CD4-positive, alpha-beta memory T cell (primary cell): ENCODE measurements at regions of chr4 and their contacts with region 1.

Region 1: DNA sequence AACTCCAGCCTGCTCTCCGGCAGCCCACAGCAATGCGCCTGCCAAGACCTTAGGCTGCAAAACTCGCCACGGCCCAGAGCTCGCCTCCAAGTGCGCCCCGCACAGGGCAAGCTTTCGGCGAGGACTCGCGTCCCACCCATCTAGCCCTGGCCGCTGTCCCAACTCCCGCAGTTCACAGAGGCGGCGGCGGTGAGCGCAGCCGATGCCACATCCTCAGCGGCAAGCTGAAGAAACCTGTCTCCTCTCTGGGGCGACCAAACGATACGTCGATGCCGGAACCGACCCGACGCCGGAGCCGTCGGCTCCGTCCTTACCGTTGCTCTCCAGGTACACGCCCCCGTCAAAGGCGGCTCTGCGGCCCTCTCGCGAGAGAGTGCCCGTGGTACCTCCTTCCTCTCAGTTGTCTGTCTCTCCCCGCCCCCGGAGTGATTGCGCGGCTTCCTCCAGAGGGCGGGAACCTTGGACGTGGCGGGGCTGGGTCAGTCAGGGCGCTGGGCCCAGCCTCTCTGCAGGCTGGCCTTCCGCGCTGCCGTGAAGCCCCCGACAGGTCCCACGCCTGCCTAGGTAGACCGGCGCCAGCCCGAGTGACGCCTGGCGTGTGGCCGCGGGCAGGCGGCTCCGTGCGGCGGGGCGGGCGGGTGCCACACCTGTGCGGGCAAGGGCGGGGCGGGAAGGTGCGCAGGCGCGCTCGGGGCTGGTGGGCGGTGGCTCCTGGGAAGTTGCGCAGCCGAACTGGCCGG is 380 bp upstream of the RAB33B start:
- DNase-seq: peak; percentile 97 to 99 (median 98)
- H3K4me3 ChIP-seq: peak overlapping the region; percentile 68 to 71
- H3K4me3 Mint-ChIP-seq: peak overlapping the region; percentile 95 to 99 (median 97)
- H3K27ac ChIP-seq: peak overlapping the region; percentile 89
- H3K27ac Mint-ChIP-seq: peak overlapping the region; percentile 98 to 100 (median 99)
- H3K4me1 ChIP-seq: peaks cover 59% of the 10 kb centered on the region
- H3K4me1 Mint-ChIP-seq: peaks cover 48 to 73% (median 61%) of the 10 kb centered on the region in 4 donors
- H3K27me3 ChIP-seq: no peaks in the 10 kb centered on the region
- H3K27me3 Mint-ChIP-seq: no peaks in the 10 kb centered on the region

Region 2: DNA sequence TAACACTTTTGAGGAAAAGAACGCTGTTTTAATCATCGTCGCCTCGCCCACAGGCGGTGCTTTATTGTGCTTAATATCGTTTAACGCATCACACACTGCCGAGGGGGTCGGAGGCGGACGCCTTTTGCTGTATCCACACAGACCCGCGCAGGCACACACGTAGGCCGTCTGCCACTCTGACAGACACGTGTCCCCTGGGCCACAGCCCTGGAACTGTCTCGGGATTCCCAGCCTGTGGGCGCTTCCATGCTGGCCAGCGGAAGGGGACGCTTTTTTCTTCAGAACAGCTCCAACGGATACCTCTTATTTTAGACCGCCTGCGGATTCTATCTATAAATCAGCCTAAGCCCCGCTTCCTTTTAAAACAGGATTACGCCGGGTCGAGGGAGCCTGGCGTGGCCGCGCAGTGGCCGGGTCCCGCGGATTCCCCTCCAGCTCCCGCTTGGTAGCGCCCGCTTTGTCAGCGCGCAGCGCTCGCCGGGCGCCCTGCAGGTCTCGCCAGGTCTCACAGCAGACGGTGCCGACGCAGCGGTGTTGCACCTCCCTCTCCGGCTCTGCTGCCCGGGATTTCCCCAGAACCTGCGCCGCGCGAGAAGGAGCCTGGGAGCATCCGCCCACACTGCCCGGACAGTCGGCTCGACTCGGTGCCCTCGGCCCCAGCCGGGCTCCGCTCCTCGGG is 438.1 kb before region 1 on chr4 and contains the start of gene NOCT:
- CTCF ChIA-PET with region 1: no interaction called
- POLR2A ChIA-PET with region 1: interaction called, 11 read pairs
- intact Hi-C with region 1: loop called (anchors 1 kb)
- DNase-seq: peak; percentile 90 to 96 (median 93)
- H3K4me3 ChIP-seq: peak within 1 kb of the TSS; percentile 20 to 66
- H3K4me3 Mint-ChIP-seq: peak within 1 kb of the TSS; percentile 87 to 94 (median 90)
- H3K27ac ChIP-seq: peak within 1 kb of the TSS; percentile 84
- H3K27ac Mint-ChIP-seq: peak within 1 kb of the TSS; percentile 93 to 100 (median 99)
- H3K4me1 ChIP-seq: peaks cover 18% of the 10 kb centered on the region
- H3K4me1 Mint-ChIP-seq: peaks cover 13 to 44% (median 17%) of the 10 kb centered on the region in 4 donors
- H3K27me3 ChIP-seq: no peaks in the 10 kb centered on the region
- H3K27me3 Mint-ChIP-seq: no peaks in the 10 kb centered on the region
- total RNA-seq, gene NOCT: 1.4 to 1.7 TPM

Region 3: DNA sequence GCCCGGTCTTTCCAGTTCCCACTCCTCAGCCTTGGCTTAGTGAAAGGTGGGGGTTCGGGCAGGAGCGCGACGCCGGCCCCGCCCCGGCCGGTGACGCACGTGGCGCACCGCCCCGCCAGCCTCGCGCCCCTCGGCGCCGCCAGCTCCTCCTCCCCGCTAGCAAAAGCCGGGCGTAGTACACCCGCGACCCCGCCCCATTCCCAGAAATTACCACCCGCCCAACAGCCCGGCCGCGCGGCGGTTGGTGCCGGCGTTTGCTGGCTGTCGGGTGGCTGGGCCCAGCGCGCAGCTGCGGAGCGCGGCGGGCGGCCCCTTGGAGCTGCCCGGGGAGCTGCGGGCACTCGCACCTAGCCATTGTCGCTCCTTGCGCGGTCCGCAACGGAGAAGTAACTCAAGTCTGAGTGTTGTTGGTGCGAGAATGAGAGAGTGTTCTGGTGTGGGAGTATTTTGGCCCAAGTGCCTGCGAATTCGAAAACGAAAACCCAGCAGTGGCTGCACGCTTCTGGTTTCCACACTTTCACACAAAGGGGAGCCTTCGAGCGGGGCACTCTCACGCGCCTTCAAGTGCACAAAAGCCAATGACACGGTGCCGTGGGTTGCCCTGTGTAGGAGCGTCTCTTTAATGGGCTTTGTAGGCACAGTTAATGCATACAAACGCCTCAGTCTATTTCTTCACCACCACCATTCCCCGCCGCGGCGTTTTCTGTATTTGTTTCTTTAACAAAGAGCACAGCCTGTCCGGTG is 275.5 kb before region 1 on chr4:
- CTCF ChIA-PET with region 1: interaction called, 3 read pairs
- POLR2A ChIA-PET with region 1: interaction called, 17 read pairs
- intact Hi-C with region 1: loop called (anchors 2 kb)
- DNase-seq: peak; percentile 92 to 94 (median 92)
- H3K4me3 ChIP-seq: peak overlapping the region; percentile 88 to 89
- H3K4me3 Mint-ChIP-seq: peak overlapping the region; percentile 89 to 94 (median 92)
- H3K27ac ChIP-seq: peak overlapping the region; percentile 96
- H3K27ac Mint-ChIP-seq: peak overlapping the region; percentile 92 to 97 (median 96)
- H3K4me1 ChIP-seq: peaks cover 17% of the 10 kb centered on the region
- H3K4me1 Mint-ChIP-seq: peaks cover 14 to 29% (median 18%) of the 10 kb centered on the region in 4 donors
- H3K27me3 ChIP-seq: no peaks in the 10 kb centered on the region
- H3K27me3 Mint-ChIP-seq: no peaks in the 10 kb centered on the region

Region 4: GRCh38 chr4:139416073-139416673 is 37.4 kb before region 1 on chr4:
- CTCF ChIA-PET with region 1: interaction called, 8 read pairs
- POLR2A ChIA-PET with region 1: interaction called, 3 read pairs
- intact Hi-C with region 1: loop called (anchors 1 kb)
- DNase-seq: peak in 4 of 5 donors; percentile 28 to 47 (median 42)
- H3K4me3 ChIP-seq: no peak overlapping the region
- H3K4me3 Mint-ChIP-seq: no peak overlapping the region
- H3K27ac ChIP-seq: no peak overlapping the region
- H3K27ac Mint-ChIP-seq: no peak overlapping the region
- H3K4me1 ChIP-seq: no peaks in the 10 kb centered on the region
- H3K4me1 Mint-ChIP-seq: peaks cover 4 to 17% (median 5%) of the 10 kb centered on the region in 4 donors
- H3K27me3 ChIP-seq: no peaks in the 10 kb centered on the region
- H3K27me3 Mint-ChIP-seq: no peaks in the 10 kb centered on the region

Region 5: DNA sequence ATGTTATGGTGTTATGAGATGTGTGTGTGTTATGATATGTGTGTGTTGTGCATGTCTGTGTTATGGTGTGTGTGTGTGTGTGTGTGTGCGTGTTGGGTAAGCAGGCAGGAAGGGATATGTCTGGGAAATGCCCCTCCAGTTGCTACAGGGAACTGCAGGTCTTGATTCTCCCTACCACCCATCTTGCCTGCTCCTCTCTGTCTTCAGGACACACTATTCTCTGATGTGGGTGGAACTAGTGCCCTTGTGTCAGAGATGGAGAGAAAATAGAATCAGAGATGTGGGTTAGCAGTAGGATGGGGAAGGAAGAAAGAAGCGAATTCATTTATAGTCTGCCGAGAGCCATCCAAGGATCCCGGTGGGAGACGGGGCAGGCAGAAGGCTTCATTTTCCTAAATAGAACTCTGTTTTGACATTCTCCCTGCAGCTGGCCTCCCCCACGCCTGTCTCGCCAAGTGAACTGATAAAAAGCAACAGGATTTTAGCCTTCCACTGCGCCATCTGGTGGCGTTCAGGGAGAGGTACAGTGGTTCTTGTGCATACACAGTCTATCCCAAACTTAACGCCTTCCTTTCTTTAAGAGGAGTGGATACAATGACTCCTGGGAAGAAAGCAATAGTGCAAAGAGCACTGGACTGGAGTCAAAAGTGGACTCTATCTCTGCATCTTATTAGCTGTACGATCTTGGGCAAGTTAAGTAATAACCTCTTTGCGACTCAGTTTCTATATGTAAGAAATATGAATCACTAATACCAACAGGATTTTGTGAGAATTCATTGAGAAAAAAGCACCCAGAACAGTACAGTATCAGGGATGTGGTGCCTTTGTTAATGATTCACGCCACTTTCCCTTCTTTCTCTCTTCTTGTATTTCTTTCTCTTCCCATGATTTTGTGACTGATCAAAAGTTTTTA is 198.0 kb after region 1 on chr4:
- CTCF ChIA-PET with region 1: interaction called, 5 read pairs
- POLR2A ChIA-PET with region 1: no interaction called
- intact Hi-C with region 1: loop called (anchors 1 kb)
- DNase-seq: peak; percentile 56 to 68 (median 61)
- H3K4me3 ChIP-seq: no peak overlapping the region
- H3K4me3 Mint-ChIP-seq: peak overlapping the region in 4 of 8 donors; percentile 6 to 32 (median 14)
- H3K27ac ChIP-seq: no peak overlapping the region
- H3K27ac Mint-ChIP-seq: no peak overlapping the region
- H3K4me1 ChIP-seq: no peaks in the 10 kb centered on the region
- H3K4me1 Mint-ChIP-seq: peaks cover 0 to 7% (median 5%) of the 10 kb centered on the region in 4 donors
- H3K27me3 ChIP-seq: no peaks in the 10 kb centered on the region
- H3K27me3 Mint-ChIP-seq: peaks cover 0 to 2% of the 10 kb centered on the region in 2 donors

Region 6: DNA sequence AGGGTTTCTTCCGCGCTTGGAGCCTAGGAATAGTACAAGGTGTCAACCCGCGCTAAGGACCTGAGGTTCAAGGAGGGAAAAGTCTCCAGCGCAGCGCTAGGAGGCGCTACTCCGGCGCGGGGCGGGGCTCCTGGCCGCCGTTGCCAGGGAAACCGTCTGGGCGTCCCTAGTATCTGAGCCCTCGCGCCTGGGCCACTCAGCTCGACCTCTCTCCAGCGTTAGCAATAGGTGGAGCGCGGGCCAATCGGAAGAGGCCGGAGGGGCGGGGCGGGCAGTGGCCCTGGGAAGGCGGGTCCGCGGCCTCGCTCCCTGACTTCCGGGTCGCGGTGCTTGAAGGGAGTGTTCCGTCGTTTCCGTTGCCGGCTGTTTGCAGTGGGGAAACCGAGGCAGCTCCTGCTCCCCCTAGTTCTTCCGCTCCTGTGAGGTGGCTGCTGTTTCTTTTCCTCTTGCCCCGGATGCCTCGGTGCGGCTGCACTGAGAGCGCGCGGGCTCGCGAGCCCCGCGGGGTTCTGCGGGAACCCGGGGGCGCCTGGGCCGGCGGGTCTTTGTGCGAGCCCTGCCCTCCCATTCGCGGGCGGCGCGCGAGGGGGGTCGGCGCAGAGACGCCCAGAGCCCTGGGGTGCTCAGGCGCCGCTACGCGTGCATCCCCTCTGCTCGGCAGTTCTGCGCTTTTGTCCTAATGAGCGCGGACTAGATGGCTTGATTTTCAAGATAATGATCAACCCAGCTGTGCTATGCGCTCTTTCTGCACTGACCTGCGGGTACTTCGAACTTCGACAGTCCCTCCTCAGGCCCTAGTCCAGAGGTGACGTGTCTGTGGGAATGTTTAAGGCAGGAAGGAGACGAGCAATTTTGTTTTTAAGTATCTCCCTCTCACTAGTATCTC is 1070.6 kb after region 1 on chr4 and contains the start of gene ELMOD2:
- CTCF ChIA-PET with region 1: no interaction called
- POLR2A ChIA-PET with region 1: interaction called, 8 read pairs
- intact Hi-C with region 1: loop called (anchors 5 kb)
- DNase-seq: peak; percentile 96 to 97 (median 97)
- H3K4me3 ChIP-seq: peak within 1 kb of the TSS; percentile 37 to 90
- H3K4me3 Mint-ChIP-seq: peak within 1 kb of the TSS; percentile 81 to 95 (median 85)
- H3K27ac ChIP-seq: peak within 1 kb of the TSS; percentile 67
- H3K27ac Mint-ChIP-seq: peak within 1 kb of the TSS; percentile 82 to 93 (median 88)
- H3K4me1 ChIP-seq: peaks cover 20% of the 10 kb centered on the region
- H3K4me1 Mint-ChIP-seq: peaks cover 12 to 26% (median 20%) of the 10 kb centered on the region in 4 donors
- H3K27me3 ChIP-seq: no peaks in the 10 kb centered on the region
- H3K27me3 Mint-ChIP-seq: no peaks in the 10 kb centered on the region
- total RNA-seq, gene ELMOD2: 26.2 to 29.8 TPM